ENCODE measurements at regions of chr1 and their contacts with region 1.

Region 1: DNA sequence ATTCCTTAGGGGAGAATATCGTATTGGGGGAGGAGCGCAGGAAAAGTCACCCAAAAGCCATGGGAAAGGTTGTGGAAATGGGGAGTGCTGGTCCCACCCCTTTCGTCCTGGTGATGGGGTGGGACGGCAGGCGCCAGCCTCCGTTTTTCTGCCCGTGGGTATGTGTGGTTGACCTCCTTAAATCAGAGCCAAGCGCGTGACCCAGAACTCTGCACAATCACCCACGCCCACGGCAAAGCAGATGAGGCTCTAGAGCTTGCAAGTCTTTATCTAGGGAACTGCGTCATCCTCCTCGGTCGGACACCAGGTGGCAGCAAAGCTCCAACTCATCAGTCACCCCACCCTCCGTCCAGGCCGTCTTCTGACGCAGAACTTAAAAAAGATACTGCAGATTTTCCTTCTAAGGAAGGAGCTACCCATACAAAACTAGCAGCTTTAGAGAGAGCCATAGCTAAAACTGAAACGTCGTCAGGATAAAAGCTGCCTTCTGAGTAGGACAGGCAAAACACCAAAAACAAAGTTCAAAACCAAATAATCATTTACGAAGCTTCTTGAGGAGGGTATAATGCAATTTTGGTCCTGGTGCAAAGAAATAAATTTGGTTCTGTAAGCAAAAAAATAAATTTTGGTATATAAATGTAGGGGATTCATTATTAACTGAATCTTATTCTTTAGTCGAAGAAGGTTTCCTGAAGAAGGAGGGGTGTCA is 62.0 kb downstream of the TBX19 start:
- DNase-seq: peak; percentile 94
- ATAC-seq: peak; percentile 98
- H3K4me3 Mint-ChIP-seq: no peak overlapping the region
- H3K27ac Mint-ChIP-seq: peak overlapping the region; percentile 64
- H3K4me1 Mint-ChIP-seq: peaks cover 35% of the 10 kb centered on the region
- H3K27me3 Mint-ChIP-seq: peaks cover 4% of the 10 kb centered on the region
- CTCF ChIP-seq: peak; percentile 77

Region 2: GRCh38 chr1:168365719-168366479 is 23.2 kb after region 1 on chr1:
- CTCF ChIA-PET with region 1: interaction called, 61 read pairs
- POLR2A ChIA-PET with region 1: interaction called, 3 read pairs
- intact Hi-C with region 1: no loop called
- DNase-seq: peak; percentile 7
- ATAC-seq: peak; percentile 47
- H3K4me3 Mint-ChIP-seq: no peak overlapping the region
- H3K27ac Mint-ChIP-seq: no peak overlapping the region
- H3K4me1 Mint-ChIP-seq: peaks cover 12% of the 10 kb centered on the region
- H3K27me3 Mint-ChIP-seq: no peaks in the 10 kb centered on the region
- CTCF ChIP-seq: peak; percentile 31

Region 3: DNA sequence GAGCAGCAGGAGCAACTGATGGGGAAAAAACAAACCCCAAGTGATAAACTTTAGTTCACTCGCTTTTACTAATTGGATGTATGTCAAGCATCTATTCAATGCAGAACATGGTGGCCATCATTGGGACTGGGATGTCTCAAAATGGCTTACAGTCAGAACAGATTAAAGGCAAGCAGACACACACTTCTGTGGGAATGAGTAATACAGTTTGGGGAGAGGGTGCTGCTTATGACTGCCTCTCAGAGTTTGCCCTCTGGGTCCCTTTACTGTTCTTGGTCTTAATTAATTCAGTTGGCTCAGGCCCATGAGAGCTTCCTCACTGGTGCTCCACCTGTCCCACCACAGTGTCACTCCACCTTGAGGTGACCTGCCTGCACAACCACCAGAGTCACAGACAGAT is 57.4 kb after region 1 on chr1:
- CTCF ChIA-PET with region 1: interaction called, 14 read pairs
- POLR2A ChIA-PET with region 1: no interaction called
- intact Hi-C with region 1: no loop called
- DNase-seq: no peak
- ATAC-seq: no peak
- H3K4me3 Mint-ChIP-seq: no peak overlapping the region
- H3K27ac Mint-ChIP-seq: no peak overlapping the region
- H3K4me1 Mint-ChIP-seq: peaks cover 12% of the 10 kb centered on the region
- H3K27me3 Mint-ChIP-seq: peaks cover 3% of the 10 kb centered on the region
- CTCF ChIP-seq: no peak

Region 4: GRCh38 chr1:168428063-168428731 is 85.5 kb after region 1 on chr1:
- CTCF ChIA-PET with region 1: interaction called, 31 read pairs
- POLR2A ChIA-PET with region 1: no interaction called
- intact Hi-C with region 1: no loop called
- DNase-seq: no peak
- ATAC-seq: no peak
- H3K4me3 Mint-ChIP-seq: no peak overlapping the region
- H3K27ac Mint-ChIP-seq: no peak overlapping the region
- H3K4me1 Mint-ChIP-seq: no peaks in the 10 kb centered on the region
- H3K27me3 Mint-ChIP-seq: no peaks in the 10 kb centered on the region
- CTCF ChIP-seq: no peak

Region 5: GRCh38 chr1:168466092-168466713 is 123.5 kb after region 1 on chr1:
- CTCF ChIA-PET with region 1: interaction called, 14 read pairs
- POLR2A ChIA-PET with region 1: no interaction called
- intact Hi-C with region 1: no loop called
- DNase-seq: peak; percentile 86
- ATAC-seq: peak; percentile 86
- H3K4me3 Mint-ChIP-seq: peak overlapping the region; percentile 22
- H3K27ac Mint-ChIP-seq: peak overlapping the region; percentile 91
- H3K4me1 Mint-ChIP-seq: peaks cover 57% of the 10 kb centered on the region
- H3K27me3 Mint-ChIP-seq: no peaks in the 10 kb centered on the region
- CTCF ChIP-seq: no peak

Region 6: DNA sequence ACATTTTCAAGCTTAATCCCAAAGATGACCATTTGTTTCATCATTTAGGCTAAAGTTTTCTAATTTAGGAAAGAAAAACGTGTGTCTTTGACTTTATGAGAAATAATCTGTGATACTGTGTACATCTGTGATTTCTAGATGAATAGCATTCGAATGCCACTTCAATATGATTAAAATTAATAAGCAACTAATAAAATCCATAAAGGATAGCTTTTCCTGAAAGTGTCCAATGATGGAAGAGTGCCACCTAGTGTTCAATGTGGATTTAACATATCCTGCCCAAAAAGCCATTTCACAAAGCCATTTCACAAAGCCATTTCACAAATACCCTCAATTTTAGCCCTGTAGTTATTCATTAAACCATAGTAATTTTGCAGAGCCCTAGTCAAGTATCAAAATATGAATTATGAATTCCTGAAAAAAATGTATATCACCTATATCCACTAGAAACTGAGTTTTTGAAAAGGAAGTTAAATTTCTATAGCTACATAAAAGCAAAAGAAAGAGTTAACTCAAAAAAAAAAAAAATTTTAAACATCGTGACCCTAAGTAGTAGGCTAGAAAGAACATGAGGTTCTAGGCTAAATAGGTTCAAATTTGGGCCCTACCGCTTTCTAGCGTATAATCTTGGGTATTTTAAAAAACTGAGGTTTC is 1005.8 kb after region 1 on chr1:
- CTCF ChIA-PET with region 1: interaction called, 20 read pairs
- POLR2A ChIA-PET with region 1: no interaction called
- intact Hi-C with region 1: no loop called
- DNase-seq: no peak
- ATAC-seq: no peak
- H3K4me3 Mint-ChIP-seq: no peak overlapping the region
- H3K27ac Mint-ChIP-seq: no peak overlapping the region
- H3K4me1 Mint-ChIP-seq: peaks cover 20% of the 10 kb centered on the region
- H3K27me3 Mint-ChIP-seq: no peaks in the 10 kb centered on the region
- CTCF ChIP-seq: peak; percentile 96